GM23248 (cell line): ENCODE measurements at regions of chr11 and their contacts with region 1.

Region 1: DNA sequence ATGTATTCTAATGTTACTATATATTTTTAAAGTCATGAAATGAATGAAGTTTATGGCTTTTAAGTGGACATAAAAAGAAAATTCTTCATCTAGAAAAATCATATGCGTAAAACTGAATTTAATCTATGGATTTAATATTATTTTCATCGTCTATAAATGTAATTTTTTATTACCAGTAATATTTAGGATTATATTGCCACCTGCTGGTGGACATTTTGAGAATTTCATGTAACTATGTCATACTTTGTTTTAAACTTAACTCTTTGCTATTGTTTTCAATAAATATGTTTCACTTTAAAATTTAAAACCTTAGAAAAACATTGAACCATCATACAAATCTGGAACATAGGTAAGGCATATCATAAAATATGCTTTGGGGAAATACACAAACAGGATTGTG is 66.5 kb upstream of the CEP126 start:
- DNase-seq: peak; percentile 55
- H3K4me3 ChIP-seq: no peak overlapping the region
- H3K27ac ChIP-seq: no peak overlapping the region
- H3K4me1 ChIP-seq: no peaks in the 10 kb centered on the region
- H3K27me3 ChIP-seq: no peaks in the 10 kb centered on the region

Region 2: GRCh38 chr11:101401245-101401644 is 447.0 kb before region 1 on chr11:
- in situ Hi-C with region 1: no loop called
- DNase-seq: peak; percentile 12
- H3K4me3 ChIP-seq: no peak overlapping the region
- H3K27ac ChIP-seq: no peak overlapping the region
- H3K4me1 ChIP-seq: no peaks in the 10 kb centered on the region
- H3K27me3 ChIP-seq: peaks cover under 1% of the 10 kb centered on the region; the same call in 1 of the 2 replicates

Region 3: GRCh38 chr11:101444164-101444563 is 404.1 kb before region 1 on chr11:
- in situ Hi-C with region 1: loop called (anchors 10 kb)
- DNase-seq: no peak
- H3K4me3 ChIP-seq: no peak overlapping the region
- H3K27ac ChIP-seq: no peak overlapping the region
- H3K4me1 ChIP-seq: peaks cover 69% of the 10 kb centered on the region
- H3K27me3 ChIP-seq: no peaks in the 10 kb centered on the region